Mammary epithelial cell (primary cell): ENCODE measurements at regions of chr16 and their contacts with region 1.

Region 1: DNA sequence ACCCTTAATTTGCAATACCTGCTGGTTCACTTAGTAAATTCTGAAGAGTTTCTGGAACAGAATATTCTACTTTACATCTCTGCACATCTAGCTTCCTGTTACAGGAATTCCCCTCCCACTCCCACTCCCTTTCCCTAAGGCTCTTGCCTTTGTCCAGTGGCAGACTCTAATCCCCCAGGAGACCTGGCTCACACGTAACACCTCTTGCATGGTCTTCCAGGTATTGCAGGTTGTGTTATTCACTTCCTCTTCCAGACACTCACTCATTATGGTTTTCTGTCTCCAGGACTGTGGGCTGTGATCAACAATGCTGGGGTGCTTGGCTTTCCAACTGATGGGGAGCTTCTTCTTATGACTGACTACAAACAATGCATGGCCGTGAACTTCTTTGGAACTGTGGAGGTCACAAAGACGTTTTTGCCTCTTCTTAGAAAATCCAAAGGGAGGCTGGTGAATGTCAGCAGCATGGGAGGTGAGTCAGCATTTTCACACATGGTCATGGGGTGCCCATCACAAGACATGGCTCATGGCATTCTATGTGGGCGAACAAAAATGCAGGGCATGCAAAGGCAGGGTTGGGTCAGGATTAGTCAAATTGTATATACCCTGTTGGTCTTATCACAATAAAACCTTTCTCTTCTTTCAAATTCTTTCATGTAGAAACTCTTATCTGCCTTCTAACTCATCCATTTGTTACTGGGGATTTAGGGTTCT is 35.8 kb downstream of the HSD17B2 start:
- DNase-seq: peak; percentile 96
- H3K4me3 ChIP-seq: peak overlapping the region in 1 of 3 experiments; percentile 8
- H3K27ac ChIP-seq: peak overlapping the region; percentile 97
- H3K4me1 ChIP-seq: peaks cover 31% of the 10 kb centered on the region
- H3K27me3 ChIP-seq: no peaks in the 10 kb centered on the region
- CTCF ChIP-seq: no peak

Region 2: GRCh38 chr16:82055728-82056549 is 14.9 kb before region 1 on chr16:
- CTCF ChIA-PET with region 1: no interaction called
- dilution Hi-C with region 1: no loop called
- in situ Hi-C with region 1: no loop called
- intact Hi-C with region 1: loop called (anchors 2 kb)
- DNase-seq: peak; percentile 75
- H3K4me3 ChIP-seq: peak overlapping the region in 1 of 3 experiments; percentile 2
- H3K27ac ChIP-seq: peak overlapping the region; percentile 79
- H3K4me1 ChIP-seq: peaks cover 19% of the 10 kb centered on the region
- H3K27me3 ChIP-seq: no peaks in the 10 kb centered on the region
- CTCF ChIP-seq: no peak

Region 3: GRCh38 chr16:82091241-82091640 is 20.4 kb after region 1 on chr16:
- CTCF ChIA-PET with region 1: no interaction called
- dilution Hi-C with region 1: no loop called
- in situ Hi-C with region 1: no loop called
- intact Hi-C with region 1: loop called (anchors 1 kb)
- DNase-seq: no peak
- H3K4me3 ChIP-seq: no peak overlapping the region
- H3K27ac ChIP-seq: no peak overlapping the region
- H3K4me1 ChIP-seq: peaks cover 41% of the 10 kb centered on the region
- H3K27me3 ChIP-seq: no peaks in the 10 kb centered on the region
- CTCF ChIP-seq: no peak

Region 4: DNA sequence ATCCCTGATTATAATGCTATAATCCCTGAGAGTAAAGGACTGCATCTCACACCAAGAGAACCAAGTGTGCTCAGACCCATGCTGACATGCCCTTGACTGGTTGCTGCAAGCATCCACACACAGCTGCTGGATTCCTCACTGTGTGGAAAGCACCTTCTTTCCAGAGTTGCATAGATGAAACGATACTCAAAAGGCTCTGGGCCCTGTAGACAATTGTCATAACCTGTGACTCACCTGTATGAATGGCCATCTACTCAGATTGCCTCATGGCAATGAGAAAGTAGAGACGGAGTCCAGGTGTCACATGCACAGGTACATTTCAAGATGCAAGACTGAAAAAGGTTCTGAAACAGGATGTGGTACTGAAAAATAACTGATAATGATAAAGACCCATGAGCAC is 41.1 kb after region 1 on chr16:
- CTCF ChIA-PET with region 1: no interaction called
- dilution Hi-C with region 1: no loop called
- in situ Hi-C with region 1: no loop called
- intact Hi-C with region 1: loop called (anchors 1 kb)
- DNase-seq: peak; percentile 99
- H3K4me3 ChIP-seq: no peak overlapping the region
- H3K27ac ChIP-seq: peak overlapping the region; percentile 73
- H3K4me1 ChIP-seq: peaks cover 17% of the 10 kb centered on the region
- H3K27me3 ChIP-seq: no peaks in the 10 kb centered on the region
- CTCF ChIP-seq: no peak

Region 5: DNA sequence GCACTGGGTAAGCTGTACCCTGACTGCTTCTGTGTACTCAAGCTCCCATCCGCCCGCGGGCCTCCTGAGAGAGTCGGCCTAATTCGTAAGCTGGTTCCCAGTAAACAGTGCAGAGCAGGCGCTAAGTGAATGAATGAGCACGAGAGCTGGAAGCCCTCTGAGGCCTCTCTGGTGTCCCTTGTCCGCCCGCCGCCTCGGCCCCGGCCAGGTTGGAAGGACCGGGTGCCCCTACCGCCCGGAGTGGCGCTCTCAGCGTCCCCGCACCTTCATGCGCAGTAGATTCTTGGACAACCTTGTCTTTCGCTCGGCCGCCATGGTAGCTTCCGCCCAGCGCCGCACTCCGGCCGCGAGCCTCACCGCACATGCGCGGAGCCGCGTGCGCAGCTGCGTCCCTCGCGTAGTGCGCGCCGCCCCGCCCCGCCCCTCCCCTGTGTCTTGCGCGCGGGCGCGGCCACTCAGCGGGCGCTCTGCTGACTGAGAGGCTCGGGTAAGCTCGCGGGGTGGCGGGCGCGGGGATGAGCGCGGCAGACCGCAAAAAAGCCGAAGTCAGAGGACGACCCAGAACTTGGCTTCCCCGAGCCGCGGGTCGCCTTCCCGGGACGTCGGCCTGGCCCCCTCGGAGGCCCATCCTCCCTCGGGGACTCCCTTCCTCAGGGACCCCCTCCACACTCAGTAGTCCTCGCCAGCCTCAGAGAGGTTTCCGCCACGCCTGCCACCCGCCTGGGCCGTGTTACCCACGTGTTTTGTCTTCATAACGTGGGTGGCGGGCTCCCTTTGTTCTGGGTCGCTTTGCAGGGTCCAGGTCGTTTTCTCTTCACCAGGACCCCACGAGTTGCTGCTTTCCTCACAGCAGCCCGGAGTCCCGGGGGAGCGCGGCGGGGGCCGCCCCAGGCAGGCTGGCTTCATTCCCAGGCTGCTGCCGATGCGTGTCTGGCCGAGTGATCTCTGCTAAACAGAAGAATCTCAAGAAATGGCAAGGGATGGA is 99.3 kb after region 1 on chr16 and contains the start of gene MPHOSPH6:
- CTCF ChIA-PET with region 1: no interaction called
- dilution Hi-C with region 1: no loop called
- in situ Hi-C with region 1: no loop called
- intact Hi-C with region 1: loop called (anchors 1 kb)
- DNase-seq: peak; percentile 91
- H3K4me3 ChIP-seq: peak within 1 kb of the TSS; percentile 84 to 100 (median 89)
- H3K27ac ChIP-seq: peak within 1 kb of the TSS; percentile 93
- H3K4me1 ChIP-seq: peaks cover 16% of the 10 kb centered on the region
- H3K27me3 ChIP-seq: no peaks in the 10 kb centered on the region
- CTCF ChIP-seq: no peak
- total RNA-seq, gene MPHOSPH6: 39.3 to 68.1 TPM

Region 6: GRCh38 chr16:82192665-82193064 is 121.9 kb after region 1 on chr16:
- CTCF ChIA-PET with region 1: no interaction called
- dilution Hi-C with region 1: no loop called
- in situ Hi-C with region 1: no loop called
- intact Hi-C with region 1: loop called (anchors 5 kb)
- DNase-seq: peak; percentile 82
- H3K4me3 ChIP-seq: no peak overlapping the region
- H3K27ac ChIP-seq: peak overlapping the region; percentile 66
- H3K4me1 ChIP-seq: peaks cover 17% of the 10 kb centered on the region
- H3K27me3 ChIP-seq: no peaks in the 10 kb centered on the region
- CTCF ChIP-seq: no peak

Region 7: DNA sequence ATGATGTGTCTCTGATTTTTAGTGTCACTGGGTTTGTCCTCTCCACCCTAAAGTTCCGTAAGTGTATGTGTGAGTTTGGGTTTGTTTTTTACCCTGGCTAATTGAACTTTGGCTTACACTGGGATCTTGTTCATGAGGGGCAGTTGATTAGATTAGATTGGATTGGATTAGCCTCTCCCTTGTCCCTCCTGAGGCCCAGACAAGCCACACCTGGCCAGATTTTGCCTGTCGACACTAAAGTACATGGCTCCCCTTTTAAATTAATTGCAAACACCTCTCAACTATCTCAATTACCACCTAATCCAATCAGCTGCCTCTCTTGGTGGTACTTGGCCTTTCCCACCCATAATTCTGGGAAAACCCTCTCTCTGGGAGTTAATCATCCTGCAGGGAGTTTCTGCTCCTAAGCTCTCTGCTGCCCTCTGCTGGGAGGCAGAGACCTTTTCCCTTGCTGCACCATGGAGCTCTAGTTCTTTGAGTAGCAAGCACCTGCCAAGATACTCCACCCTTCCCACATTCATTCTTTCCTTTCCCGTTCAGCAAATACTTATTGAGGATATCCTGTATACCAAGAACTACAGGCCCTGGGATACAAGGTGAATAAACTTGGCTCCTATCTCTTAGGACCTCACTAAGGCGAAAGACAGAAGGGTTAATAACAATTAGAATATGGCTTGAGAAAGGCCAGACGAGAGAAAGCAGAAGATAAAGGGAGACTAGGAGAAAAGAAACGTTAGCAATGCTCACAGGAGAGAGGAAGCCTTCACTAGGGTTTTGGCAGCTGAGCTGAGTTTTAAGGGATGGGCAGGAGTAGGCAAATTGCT is 159.2 kb after region 1 on chr16:
- CTCF ChIA-PET with region 1: interaction called, 10 read pairs
- dilution Hi-C with region 1: no loop called
- in situ Hi-C with region 1: no loop called
- intact Hi-C with region 1: no loop called
- DNase-seq: peak; percentile 60
- H3K4me3 ChIP-seq: no peak overlapping the region
- H3K27ac ChIP-seq: no peak overlapping the region
- H3K4me1 ChIP-seq: peaks cover 14% of the 10 kb centered on the region
- H3K27me3 ChIP-seq: no peaks in the 10 kb centered on the region
- CTCF ChIP-seq: peak; percentile 90 to 96